ENCODE measurements at regions of chr6 and their contacts with region 1.

Region 1: GRCh38 chr6:16332175-16332542 is 93.8 kb downstream of the GMPR start:
- DNase-seq: peak; percentile 70

Region 2: GRCh38 chr6:16200321-16200883 is 131.8 kb before region 1 on chr6:
- CTCF ChIA-PET with region 1: no interaction called
- POLR2A ChIA-PET with region 1: no interaction called
- DNase-seq: no peak

Region 3: GRCh38 chr6:16383607-16384206 is 51.5 kb after region 1 on chr6:
- CTCF ChIA-PET with region 1: no interaction called
- POLR2A ChIA-PET with region 1: no interaction called
- DNase-seq: no peak

Region 4: GRCh38 chr6:16409531-16410441 is 77.6 kb after region 1 on chr6:
- CTCF ChIA-PET with region 1: interaction called, 10 read pairs
- POLR2A ChIA-PET with region 1: no interaction called
- DNase-seq: peak; percentile 49

Region 5: GRCh38 chr6:16576451-16577368 is 244.6 kb after region 1 on chr6:
- CTCF ChIA-PET with region 1: no interaction called
- POLR2A ChIA-PET with region 1: no interaction called
- DNase-seq: no peak

Region 6: GRCh38 chr6:16803294-16804200 is 471.4 kb after region 1 on chr6:
- CTCF ChIA-PET with region 1: no interaction called
- POLR2A ChIA-PET with region 1: no interaction called
- DNase-seq: peak; percentile 75